Heart left ventricle (tissue), 16 donors: ENCODE measurements at regions of chr17 and their contacts with region 1.

Region 1: GRCh38 chr17:76353599-76354316 is at the start of gene PRPSAP1:
- DNase-seq: peak; percentile 88 to 93 (median 90)
- ATAC-seq: peak; percentile 96 to 99 (median 98)
- H3K4me3 ChIP-seq: peak within 1 kb of the TSS; percentile 64 to 100 (median 94)
- H3K27ac ChIP-seq: peak within 1 kb of the TSS; percentile 72 to 99 (median 90)
- H3K4me1 ChIP-seq: peaks cover 0 to 30% (median 13%) of the 10 kb centered on the region in 12 donors
- H3K27me3 ChIP-seq: no peaks in the 10 kb centered on the region
- CTCF ChIP-seq: peak; percentile 31 to 82 (median 59)
- POLR2A ChIP-seq: peak; percentile 36 to 65
- total RNA-seq, gene PRPSAP1: 28.2 to 39.7 (median 30.9) TPM

Region 2: DNA sequence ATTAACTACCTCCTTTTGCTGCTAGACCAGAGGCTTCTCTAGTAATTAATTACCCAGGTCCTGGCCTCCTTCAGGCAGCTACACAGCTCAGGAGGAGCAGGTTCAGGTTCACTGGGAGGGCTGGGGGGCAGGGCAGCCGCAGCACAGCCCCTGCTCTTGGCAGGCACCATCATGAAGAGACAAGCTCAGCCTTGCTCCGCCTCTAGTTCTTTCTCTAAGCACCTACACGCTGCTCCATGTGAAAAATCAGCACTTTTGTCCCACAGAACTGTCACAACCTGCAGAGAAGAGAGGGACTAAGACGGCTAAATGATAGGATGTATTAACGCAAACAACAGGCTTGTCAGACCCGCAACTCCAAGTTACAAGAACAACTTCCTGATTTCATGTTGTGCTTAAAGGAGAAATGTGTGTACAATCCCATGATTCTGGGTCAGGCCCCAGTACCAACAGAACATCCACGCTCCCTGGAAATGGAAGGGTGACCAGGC is 1001.6 kb before region 1 on chr17:
- intact Hi-C with region 1: no loop called
- DNase-seq: no peak
- ATAC-seq: no peak
- H3K4me3 ChIP-seq: no peak overlapping the region
- H3K27ac ChIP-seq: peak overlapping the region in 2 of 12 donors; percentile 13 to 34
- H3K4me1 ChIP-seq: peaks cover 0 to 85% (median 11%) of the 10 kb centered on the region in 12 donors
- H3K27me3 ChIP-seq: no peaks in the 10 kb centered on the region
- CTCF ChIP-seq: no peak
- POLR2A ChIP-seq: no peak

Region 3: GRCh38 chr17:76223802-76224201 is 130.0 kb before region 1 on chr17:
- intact Hi-C with region 1: no loop called
- DNase-seq: no peak
- ATAC-seq: no peak
- H3K4me3 ChIP-seq: no peak overlapping the region
- H3K27ac ChIP-seq: no peak overlapping the region
- H3K4me1 ChIP-seq: no peaks in the 10 kb centered on the region
- H3K27me3 ChIP-seq: no peaks in the 10 kb centered on the region
- CTCF ChIP-seq: no peak
- POLR2A ChIP-seq: no peak

Region 4: DNA sequence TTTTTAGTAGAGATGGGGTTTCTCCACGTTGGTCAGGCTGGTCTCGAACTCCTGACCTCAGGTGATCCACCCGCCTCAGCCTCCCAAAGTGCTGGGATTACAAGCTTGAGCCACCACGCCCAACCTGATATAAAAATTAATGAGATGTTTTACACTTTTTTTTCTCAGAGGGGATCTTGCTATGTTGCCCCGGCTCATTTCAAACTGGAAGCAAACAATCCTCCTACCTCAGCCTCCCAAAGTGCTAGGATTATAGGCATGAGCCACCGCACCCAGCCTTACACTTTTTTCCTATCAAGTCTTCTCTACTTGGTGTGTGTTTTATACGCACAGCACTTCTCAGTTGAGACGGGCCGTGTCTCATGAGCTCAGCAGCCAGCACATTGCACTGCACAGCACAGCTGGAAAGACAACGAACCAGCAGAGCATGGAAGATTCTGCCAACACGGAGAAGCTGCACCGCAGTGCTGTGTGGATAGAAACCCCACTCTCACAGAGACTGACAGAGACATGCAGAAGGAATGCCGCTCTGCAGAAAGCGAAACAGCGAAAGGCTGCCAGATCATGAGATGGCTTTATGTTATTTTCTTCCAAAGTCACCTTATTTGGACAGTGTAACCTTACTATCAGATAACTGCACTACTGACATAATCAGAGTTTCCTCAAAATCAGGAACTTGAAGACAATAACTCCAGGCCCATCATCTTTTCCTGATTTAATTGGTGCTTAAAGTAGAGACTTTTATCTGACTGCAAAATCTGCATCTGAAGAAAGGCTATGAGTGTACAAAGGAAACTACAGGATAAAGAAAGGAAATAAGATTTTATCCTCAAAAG is 39.1 kb before region 1 on chr17:
- intact Hi-C with region 1: loop called in 3 of 10 experiments (anchors 5 kb)
- DNase-seq: peak in 1 of 5 donors; percentile 38
- ATAC-seq: peak; percentile 47 to 90 (median 64)
- H3K4me3 ChIP-seq: peak overlapping the region in 5 of 12 donors; percentile 11 to 40 (median 14)
- H3K27ac ChIP-seq: peak overlapping the region in 10 of 12 donors; percentile 17 to 71 (median 68)
- H3K4me1 ChIP-seq: peaks cover 0 to 10% (median 0%) of the 10 kb centered on the region in 12 donors
- H3K27me3 ChIP-seq: no peaks in the 10 kb centered on the region
- CTCF ChIP-seq: no peak
- POLR2A ChIP-seq: no peak

Region 5: GRCh38 chr17:76327696-76328095 is 26.1 kb before region 1 on chr17:
- intact Hi-C with region 1: loop called in 1 of 10 experiments (anchors 5 kb)
- DNase-seq: peak in 1 of 5 donors; percentile 30
- ATAC-seq: peak in 2 of 4 donors; percentile 39 to 44
- H3K4me3 ChIP-seq: no peak overlapping the region
- H3K27ac ChIP-seq: peak overlapping the region in 1 of 12 donors; percentile 74
- H3K4me1 ChIP-seq: peaks cover 0 to 14% (median 0%) of the 10 kb centered on the region in 12 donors
- H3K27me3 ChIP-seq: no peaks in the 10 kb centered on the region
- CTCF ChIP-seq: no peak
- POLR2A ChIP-seq: no peak

Region 6: DNA sequence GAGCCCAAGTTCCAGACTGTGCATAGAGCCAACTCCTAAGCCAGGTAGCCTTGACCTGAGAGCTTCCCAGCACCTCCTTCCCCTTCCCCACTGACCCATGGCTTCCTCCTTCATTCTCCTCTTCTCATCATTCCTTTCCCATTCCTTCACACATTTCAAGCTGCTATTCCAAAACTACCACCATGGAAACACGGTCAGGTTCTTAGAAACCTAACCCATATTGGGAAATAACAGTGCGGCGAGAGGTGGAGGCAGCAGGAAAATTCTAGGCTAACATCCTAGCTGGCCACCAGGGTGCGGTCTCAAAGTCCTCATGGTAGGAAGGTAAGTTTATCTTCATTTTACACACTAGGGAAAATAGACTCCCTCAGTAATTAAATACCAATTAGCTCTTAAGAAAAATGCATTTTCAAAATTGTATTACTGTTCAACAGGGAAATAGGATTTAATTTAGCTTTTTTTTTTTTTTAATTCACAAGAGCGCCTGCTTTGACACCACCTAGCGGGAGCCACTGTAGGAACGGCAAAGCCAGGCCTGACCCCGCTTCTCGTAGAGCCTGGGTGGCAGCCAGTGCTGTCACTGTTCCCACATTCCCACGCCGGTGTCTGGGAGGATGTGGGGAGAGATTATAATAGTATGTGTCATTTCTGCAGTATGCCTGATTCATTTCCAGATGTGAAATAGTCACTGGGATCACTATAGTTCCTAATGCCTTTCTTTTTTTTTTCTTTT is 16.7 kb after region 1 on chr17:
- intact Hi-C with region 1: loop called in 1 of 10 experiments (anchors 2 kb)
- DNase-seq: peak; percentile 84 to 92 (median 87)
- ATAC-seq: peak; percentile 90 to 97 (median 94)
- H3K4me3 ChIP-seq: peak overlapping the region in 1 of 12 donors; percentile 6
- H3K27ac ChIP-seq: peak overlapping the region in 11 of 12 donors; percentile 23 to 72 (median 49)
- H3K4me1 ChIP-seq: peaks cover 0 to 23% (median 18%) of the 10 kb centered on the region in 12 donors
- H3K27me3 ChIP-seq: no peaks in the 10 kb centered on the region
- CTCF ChIP-seq: peak; percentile 32 to 83 (median 64)
- POLR2A ChIP-seq: no peak

Region 7: GRCh38 chr17:76385892-76386721 is 32.3 kb after region 1 on chr17:
- intact Hi-C with region 1: loop called in 2 of 10 experiments (anchors 5 kb)
- DNase-seq: peak; percentile 81 to 91 (median 83)
- ATAC-seq: peak in 3 of 4 donors; percentile 23 to 46 (median 37)
- H3K4me3 ChIP-seq: peak overlapping the region in 11 of 12 donors; percentile 58 to 76 (median 66)
- H3K27ac ChIP-seq: peak overlapping the region in 9 of 12 donors; percentile 21 to 95 (median 84)
- H3K4me1 ChIP-seq: peaks cover 0 to 50% (median 32%) of the 10 kb centered on the region in 12 donors
- H3K27me3 ChIP-seq: no peaks in the 10 kb centered on the region
- CTCF ChIP-seq: peak; percentile 71 to 95 (median 88)
- POLR2A ChIP-seq: no peak

Region 8: GRCh38 chr17:76397687-76398487 is 44.1 kb after region 1 on chr17:
- intact Hi-C with region 1: loop called in 2 of 10 experiments (anchors 5 kb)
- DNase-seq: peak; percentile 85 to 94 (median 90)
- ATAC-seq: peak; percentile 38 to 86 (median 82)
- H3K4me3 ChIP-seq: no peak overlapping the region
- H3K27ac ChIP-seq: no peak overlapping the region
- H3K4me1 ChIP-seq: peaks cover 0 to 19% (median 5%) of the 10 kb centered on the region in 12 donors
- H3K27me3 ChIP-seq: no peaks in the 10 kb centered on the region
- CTCF ChIP-seq: peak; percentile 92 to 99 (median 98)
- POLR2A ChIP-seq: no peak